ENCODE measurements at regions of chr17 and their contacts with region 1.

Region 1: DNA sequence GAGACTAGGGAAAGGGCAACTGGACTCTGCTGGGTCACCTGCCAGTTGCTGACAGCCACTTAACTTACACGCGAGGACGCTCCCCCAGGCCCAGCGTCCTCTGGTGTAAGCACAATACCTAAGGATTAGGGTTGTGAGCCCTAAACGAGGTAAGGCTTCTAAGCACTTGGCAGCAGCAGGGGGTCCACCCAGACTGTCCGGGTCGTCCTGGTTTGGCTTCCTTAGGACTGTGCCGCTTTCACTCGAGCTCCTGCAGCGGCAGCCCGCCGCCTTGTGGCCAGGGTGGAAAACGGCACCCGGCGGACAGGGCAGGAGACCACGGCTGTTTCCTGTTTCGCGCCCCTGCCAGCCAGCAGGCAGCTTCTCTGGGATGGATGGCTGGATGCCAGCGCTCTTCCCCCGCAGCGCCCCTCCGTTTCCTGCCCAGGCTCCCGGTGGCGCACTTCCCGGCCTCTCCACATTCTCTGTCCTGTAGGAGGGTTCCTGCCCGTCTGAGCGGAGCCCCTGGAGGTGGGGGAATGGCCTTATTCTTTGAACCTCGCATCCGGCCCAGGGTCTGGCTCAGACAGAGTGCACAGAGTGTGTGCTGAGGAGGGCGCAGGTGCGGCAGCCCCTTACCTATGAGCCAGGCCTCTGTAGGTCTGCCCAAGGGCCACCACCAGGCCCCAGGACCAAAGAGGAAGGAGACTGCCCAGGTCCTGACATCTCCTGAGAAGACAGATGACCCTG is 47.0 kb upstream of the AMZ2 start:
- DNase-seq: peak in 33 of 35 experiments; percentile 47 to 82 (median 66)
- ATAC-seq: peak; percentile 22 to 38 (median 30)
- H3K4me3 ChIP-seq: peak overlapping the region; percentile 62 to 86
- H3K4me3 Mint-ChIP-seq: peak overlapping the region; percentile 76 to 84 (median 77)
- H3K27ac ChIP-seq: peak overlapping the region; percentile 3
- H3K27ac Mint-ChIP-seq: peak overlapping the region in 1 of 2 donors; percentile 76
- H3K4me1 ChIP-seq: peaks cover 22 to 62% of the 10 kb centered on the region in 2 experiments
- H3K4me1 Mint-ChIP-seq: peaks cover 21 to 39% (median 37%) of the 10 kb centered on the region in 3 donors
- H3K27me3 ChIP-seq: peaks cover 0 to 47% of the 10 kb centered on the region in 2 experiments
- H3K27me3 Mint-ChIP-seq: peaks cover 0 to 8% of the 10 kb centered on the region in 2 donors

Region 2: DNA sequence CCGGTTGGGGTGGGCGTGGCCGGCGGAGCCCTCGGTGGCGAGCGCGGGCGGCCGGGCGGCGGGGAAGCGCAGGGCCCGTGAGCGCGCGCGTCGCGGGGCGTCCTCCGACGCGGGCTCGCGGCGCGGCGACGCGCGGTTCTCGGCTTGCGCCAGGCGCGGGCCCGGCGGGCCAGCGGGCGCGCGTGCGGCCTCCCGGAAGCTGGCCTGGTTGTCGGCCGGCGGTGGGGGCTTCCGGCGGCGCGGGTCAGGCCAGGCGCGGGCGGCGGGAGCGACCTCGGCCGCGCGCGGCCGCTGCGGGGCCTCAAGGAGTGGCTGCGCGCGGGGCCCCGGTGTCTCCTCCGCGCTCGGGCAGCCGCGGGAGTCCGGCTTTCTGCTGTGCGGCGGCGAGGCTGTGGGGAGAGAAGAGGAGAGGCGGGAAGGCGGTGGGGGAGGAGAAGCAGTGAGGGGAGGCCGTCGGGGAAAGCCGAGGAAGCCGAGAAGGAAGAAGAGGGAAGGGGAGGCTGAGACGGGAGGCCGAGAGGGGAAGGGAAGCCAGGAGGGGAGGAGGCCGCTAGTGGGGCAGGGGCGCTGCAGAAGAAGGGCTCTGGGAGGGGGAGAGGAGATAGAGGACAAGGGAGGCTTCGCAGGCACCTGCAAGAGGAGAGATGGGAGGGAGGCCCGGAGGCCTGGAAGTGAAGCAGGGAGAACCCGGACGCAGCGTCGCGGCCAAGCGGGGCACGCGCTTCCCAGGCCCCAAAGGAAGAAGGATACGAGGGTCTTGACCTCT is 207.1 kb before region 1 on chr17:
- CTCF ChIA-PET with region 1: no interaction called
- POLR2A ChIA-PET with region 1: no interaction called
- DNase-seq: peak in 16 of 35 experiments; percentile 5 to 63 (median 40)
- ATAC-seq: peak; percentile 70 to 81 (median 79)
- H3K4me3 ChIP-seq: peak overlapping the region; percentile 38 to 60
- H3K4me3 Mint-ChIP-seq: peak overlapping the region; percentile 78 to 95 (median 80)
- H3K27ac ChIP-seq: peak overlapping the region; percentile 29
- H3K27ac Mint-ChIP-seq: peak overlapping the region; percentile 55 to 76
- H3K4me1 ChIP-seq: peaks cover 11 to 34% of the 10 kb centered on the region in 2 experiments
- H3K4me1 Mint-ChIP-seq: peaks cover 25 to 35% (median 33%) of the 10 kb centered on the region in 3 donors
- H3K27me3 ChIP-seq: peaks cover 5 to 23% of the 10 kb centered on the region in 2 experiments
- H3K27me3 Mint-ChIP-seq: peaks cover 17 to 19% of the 10 kb centered on the region in 2 donors

Region 3: GRCh38 chr17:68172461-68172954 is 28.3 kb before region 1 on chr17:
- CTCF ChIA-PET with region 1: interaction called, 8 to 13 read pairs
- POLR2A ChIA-PET with region 1: interaction called in 1 of 2 experiments, 3 read pairs
- DNase-seq: peak; percentile 35 to 85 (median 68)
- ATAC-seq: peak; percentile 67 to 78 (median 72)
- H3K4me3 ChIP-seq: no peak overlapping the region
- H3K4me3 Mint-ChIP-seq: no peak overlapping the region
- H3K27ac ChIP-seq: no peak overlapping the region
- H3K27ac Mint-ChIP-seq: no peak overlapping the region
- H3K4me1 ChIP-seq: peaks cover 11 to 28% of the 10 kb centered on the region in 2 experiments
- H3K4me1 Mint-ChIP-seq: peaks cover 14 to 28% (median 22%) of the 10 kb centered on the region in 3 donors
- H3K27me3 ChIP-seq: no peaks in the 10 kb centered on the region
- H3K27me3 Mint-ChIP-seq: no peaks in the 10 kb centered on the region

Region 4: GRCh38 chr17:68684949-68685357 is 484.1 kb after region 1 on chr17:
- CTCF ChIA-PET with region 1: no interaction called
- POLR2A ChIA-PET with region 1: no interaction called
- DNase-seq: no peak
- ATAC-seq: no peak
- H3K4me3 ChIP-seq: no peak overlapping the region
- H3K4me3 Mint-ChIP-seq: no peak overlapping the region
- H3K27ac ChIP-seq: no peak overlapping the region
- H3K27ac Mint-ChIP-seq: no peak overlapping the region
- H3K4me1 ChIP-seq: no peaks in the 10 kb centered on the region
- H3K4me1 Mint-ChIP-seq: no peaks in the 10 kb centered on the region
- H3K27me3 ChIP-seq: no peaks in the 10 kb centered on the region
- H3K27me3 Mint-ChIP-seq: peaks cover 8 to 14% of the 10 kb centered on the region in 2 donors

Region 5: GRCh38 chr17:69388822-69389442 is 1188.1 kb after region 1 on chr17:
- CTCF ChIA-PET with region 1: no interaction called
- POLR2A ChIA-PET with region 1: no interaction called
- DNase-seq: no peak
- ATAC-seq: no peak
- H3K4me3 ChIP-seq: no peak overlapping the region
- H3K4me3 Mint-ChIP-seq: no peak overlapping the region
- H3K27ac ChIP-seq: no peak overlapping the region
- H3K27ac Mint-ChIP-seq: no peak overlapping the region
- H3K4me1 ChIP-seq: no peaks in the 10 kb centered on the region
- H3K4me1 Mint-ChIP-seq: no peaks in the 10 kb centered on the region
- H3K27me3 ChIP-seq: peaks cover 0 to 8% of the 10 kb centered on the region in 2 experiments
- H3K27me3 Mint-ChIP-seq: peaks cover 16 to 18% of the 10 kb centered on the region in 2 donors